Endothelial cell of umbilical vein (primary cell): ENCODE measurements at regions of chr1 and their contacts with region 1.

Region 1: GRCh38 chr1:186404454-186405051 is 28.9 kb downstream of the ODR4 start:
- DNase-seq: peak; percentile 89
- H3K4me3 ChIP-seq: no peak overlapping the region
- H3K27ac ChIP-seq: peak overlapping the region; percentile 89
- H3K4me1 ChIP-seq: peaks cover 6% of the 10 kb centered on the region
- H3K27me3 ChIP-seq: no peaks in the 10 kb centered on the region
- CTCF ChIP-seq: peak; percentile 47 to 66
- POLR2A ChIP-seq: no peak

Region 2: GRCh38 chr1:186375088-186375953 is 29.2 kb before region 1 on chr1 and contains the starts of genes ODR4 and TPR:
- CTCF ChIA-PET with region 1: interaction called, 17 read pairs
- POLR2A ChIA-PET with region 1: no interaction called
- dilution Hi-C with region 1: no loop called
- intact Hi-C with region 1: loop called (anchors 2 kb)
- DNase-seq: peak; percentile 99
- H3K4me3 ChIP-seq: peak within 1 kb of the TSS; percentile 65 to 91 (median 68)
- H3K27ac ChIP-seq: peak within 1 kb of the TSS; percentile 63
- H3K4me1 ChIP-seq: peaks cover 18% of the 10 kb centered on the region
- H3K27me3 ChIP-seq: no peaks in the 10 kb centered on the region
- CTCF ChIP-seq: peak; percentile 90 to 98
- POLR2A ChIP-seq: peak; percentile 83
- total RNA-seq, gene ODR4: 17.3 and 18.6 TPM in 2 replicates
- total RNA-seq, gene TPR: 107 and 118 TPM in 2 replicates

Region 3: DNA sequence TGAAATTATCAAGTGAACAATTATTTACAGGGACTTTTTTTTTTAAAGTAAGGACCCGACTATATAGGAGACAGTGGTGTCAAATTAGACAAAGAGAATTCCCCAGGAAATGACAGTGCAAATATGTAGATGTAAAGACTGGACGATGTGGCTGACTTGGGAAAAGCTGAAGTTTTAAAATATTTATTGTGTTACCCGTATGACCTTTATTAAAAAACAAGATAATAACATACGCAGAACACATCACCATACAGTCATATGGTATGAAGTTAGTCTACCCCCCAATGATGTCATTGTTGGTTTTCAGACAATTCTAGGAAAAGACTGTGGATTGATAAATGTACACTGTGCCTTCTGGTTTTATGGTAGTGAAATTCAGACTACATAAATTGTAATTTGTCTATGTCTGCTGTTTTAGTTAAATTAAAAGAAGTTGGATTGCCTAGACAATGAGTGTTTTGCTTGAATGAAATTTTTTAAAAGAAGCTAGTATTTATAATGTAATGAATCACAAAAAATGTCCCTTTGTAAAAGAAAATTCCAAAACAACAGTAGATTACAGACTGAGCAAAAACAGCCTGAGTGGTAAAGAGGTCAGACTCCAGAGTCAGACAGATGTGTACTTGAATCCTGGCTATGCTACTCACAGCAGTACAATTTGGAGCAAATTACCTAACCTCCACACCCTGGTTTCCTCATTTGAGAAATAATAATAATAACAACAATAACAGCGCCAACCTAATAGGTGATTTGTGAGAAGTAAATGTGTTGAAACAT is 71.9 kb after region 1 on chr1:
- CTCF ChIA-PET with region 1: interaction called, 10 read pairs
- POLR2A ChIA-PET with region 1: no interaction called
- dilution Hi-C with region 1: no loop called
- intact Hi-C with region 1: loop called (anchors 1 kb)
- DNase-seq: peak; percentile 95
- H3K4me3 ChIP-seq: peak overlapping the region in 1 of 3 experiments; percentile 15
- H3K27ac ChIP-seq: peak overlapping the region; percentile 95
- H3K4me1 ChIP-seq: peaks cover 24% of the 10 kb centered on the region
- H3K27me3 ChIP-seq: no peaks in the 10 kb centered on the region
- CTCF ChIP-seq: no peak
- POLR2A ChIP-seq: no peak

Region 4: GRCh38 chr1:186574951-186575747 is 170.6 kb after region 1 on chr1:
- CTCF ChIA-PET with region 1: no interaction called
- POLR2A ChIA-PET with region 1: no interaction called
- dilution Hi-C with region 1: no loop called
- intact Hi-C with region 1: loop called (anchors 2 kb)
- DNase-seq: peak; percentile 79
- H3K4me3 ChIP-seq: no peak overlapping the region
- H3K27ac ChIP-seq: peak overlapping the region; percentile 45
- H3K4me1 ChIP-seq: peaks cover 21% of the 10 kb centered on the region
- H3K27me3 ChIP-seq: no peaks in the 10 kb centered on the region
- CTCF ChIP-seq: no peak
- POLR2A ChIP-seq: no peak

Region 5: DNA sequence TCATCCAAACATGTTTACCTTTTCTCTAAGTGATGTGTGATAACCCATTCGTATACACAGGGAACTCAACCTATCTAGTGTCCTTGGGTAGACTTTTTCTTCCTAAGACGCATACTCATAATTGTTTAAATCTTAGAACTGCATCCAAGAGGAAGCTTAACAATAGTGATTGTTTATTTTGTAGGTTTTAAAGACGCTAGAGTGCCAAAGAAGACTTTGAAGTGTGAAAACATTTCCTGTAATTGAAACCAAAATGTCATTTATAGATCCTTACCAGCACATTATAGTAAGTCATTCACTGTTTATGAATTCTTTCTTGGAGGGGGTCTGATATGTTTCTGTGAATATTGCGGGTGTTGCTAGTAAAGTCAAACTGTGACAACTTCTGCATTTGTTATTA is 449.5 kb after region 1 on chr1:
- CTCF ChIA-PET with region 1: no interaction called
- POLR2A ChIA-PET with region 1: no interaction called
- dilution Hi-C with region 1: no loop called
- intact Hi-C with region 1: loop called (anchors 1 kb)
- DNase-seq: peak; percentile 78
- H3K4me3 ChIP-seq: peak overlapping the region in 1 of 3 experiments; percentile 6
- H3K27ac ChIP-seq: no peak overlapping the region
- H3K4me1 ChIP-seq: peaks cover 13% of the 10 kb centered on the region
- H3K27me3 ChIP-seq: no peaks in the 10 kb centered on the region
- CTCF ChIP-seq: no peak
- POLR2A ChIP-seq: no peak

Region 6: GRCh38 chr1:186974774-186975181 is 570.2 kb after region 1 on chr1:
- CTCF ChIA-PET with region 1: interaction called, 6 read pairs
- POLR2A ChIA-PET with region 1: no interaction called
- dilution Hi-C with region 1: no loop called
- intact Hi-C with region 1: loop called (anchors 1 kb)
- DNase-seq: peak; percentile 98
- H3K4me3 ChIP-seq: peak overlapping the region in 1 of 3 experiments; percentile 12
- H3K27ac ChIP-seq: peak overlapping the region; percentile 93
- H3K4me1 ChIP-seq: peaks cover 49% of the 10 kb centered on the region
- H3K27me3 ChIP-seq: no peaks in the 10 kb centered on the region
- CTCF ChIP-seq: no peak
- POLR2A ChIP-seq: peak; percentile 28